ENCODE measurements at regions of chr1 and their contacts with region 1.

Region 1: GRCh38 chr1:202034683-202035462 is 24.5 kb downstream of the ELF3 start:
- DNase-seq: peak; percentile 81

Region 2: DNA sequence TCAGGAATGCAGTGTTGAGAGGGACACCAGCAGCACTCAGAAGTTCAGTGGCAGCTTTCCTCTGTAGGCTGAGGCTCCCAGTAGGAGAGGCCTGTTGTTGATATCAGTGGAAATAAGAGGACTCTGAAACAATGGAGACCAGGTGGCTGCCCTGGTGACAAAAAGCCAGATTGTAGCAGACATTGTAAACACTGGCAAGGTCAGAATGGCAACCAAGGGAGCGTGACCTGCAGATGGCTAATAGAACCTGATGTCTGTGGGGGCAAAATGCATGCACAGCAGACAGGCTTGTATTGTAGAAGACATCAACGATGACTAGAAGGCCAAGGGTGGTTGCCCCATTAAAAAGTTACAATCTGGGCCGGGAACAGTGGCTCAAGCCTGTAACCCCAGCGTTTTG is 34.8 kb after region 1 on chr1:
- intact Hi-C with region 1: no loop called
- DNase-seq: no peak

Region 3: DNA sequence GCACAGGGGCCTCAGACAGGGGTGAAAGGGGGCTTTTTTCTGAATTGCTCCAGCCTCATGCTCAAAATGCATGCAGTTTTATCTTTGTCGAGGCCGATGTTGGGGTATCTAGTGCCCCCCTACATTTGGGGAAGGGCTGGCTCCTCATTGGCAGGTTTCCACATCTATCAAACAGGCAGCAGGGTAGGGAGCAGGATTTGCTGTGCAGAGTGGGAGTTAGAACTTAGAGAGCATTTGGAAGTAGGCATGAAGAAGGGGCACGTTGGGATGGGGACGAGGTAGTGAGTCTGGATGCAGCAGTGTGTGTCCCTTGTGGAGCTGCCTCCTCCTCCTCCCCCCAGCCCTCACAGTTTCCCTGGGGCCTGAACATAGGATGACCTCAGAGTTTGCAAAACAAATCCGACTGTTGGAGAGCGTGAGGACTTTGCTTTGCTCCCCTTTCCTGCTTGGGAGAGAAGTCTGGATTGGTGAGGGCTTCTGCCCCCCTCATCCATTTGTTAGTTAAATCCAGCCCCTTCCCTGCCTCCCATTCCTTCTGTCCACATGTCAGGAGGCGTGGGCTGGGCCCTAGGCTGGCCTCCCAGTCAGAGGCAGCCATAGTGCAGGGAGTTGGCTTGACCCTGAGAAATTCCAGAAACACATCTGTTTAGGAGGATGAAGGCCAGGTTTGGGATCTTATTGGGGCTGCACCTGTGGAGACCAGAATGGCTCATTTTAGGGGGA is 51.0 kb after region 1 on chr1:
- intact Hi-C with region 1: loop called (anchors 5 kb)
- DNase-seq: no peak

Region 4: DNA sequence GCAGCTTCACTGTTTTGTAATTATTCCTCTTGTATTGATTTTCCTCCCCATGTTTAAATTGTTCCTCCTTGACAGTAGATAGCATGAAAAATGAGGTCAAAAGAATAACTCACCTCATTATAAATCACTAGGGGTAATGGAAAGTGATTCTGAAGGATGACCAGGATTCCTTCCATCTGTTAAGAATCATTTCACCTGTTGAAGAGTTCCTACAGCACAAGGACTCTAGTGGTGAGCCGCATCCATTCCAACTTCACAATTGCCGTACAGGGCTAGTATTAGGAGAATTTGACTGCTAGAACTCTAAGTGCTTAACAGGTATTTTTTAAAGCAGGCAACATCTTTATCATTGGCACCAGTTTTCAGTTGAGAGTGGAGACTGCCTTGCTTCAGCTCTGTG is 327.3 kb after region 1 on chr1:
- intact Hi-C with region 1: no loop called
- DNase-seq: no peak

Measured in cardiac septum (tissue), 1 donor.